B cell (primary cell): ENCODE measurements at regions of chr21 and their contacts with region 1.

Region 1: GRCh38 chr21:31731802-31732596 is at the start of gene SCAF4:
- DNase-seq: peak; percentile 90
- ATAC-seq: peak; percentile 82
- H3K4me3 ChIP-seq: peak within 1 kb of the TSS; percentile 51 to 89 (median 77)
- H3K4me3 Mint-ChIP-seq: no peak within 1 kb of the TSS
- H3K27ac ChIP-seq: peak within 1 kb of the TSS; percentile 79 to 89
- H3K27ac Mint-ChIP-seq: peak within 1 kb of the TSS; percentile 91
- H3K4me1 ChIP-seq: peaks cover 65 to 68% of the 10 kb centered on the region in 2 donors
- H3K4me1 Mint-ChIP-seq: peaks cover 30% of the 10 kb centered on the region
- H3K27me3 ChIP-seq: no peaks in the 10 kb centered on the region
- H3K27me3 Mint-ChIP-seq: no peaks in the 10 kb centered on the region
- CTCF ChIP-seq: no peak
- total RNA-seq, gene SCAF4: 110 and 116 TPM in 2 replicates

Region 2: GRCh38 chr21:31713973-31714740 is 17.8 kb before region 1 on chr21:
- CTCF ChIA-PET with region 1: no interaction called
- POLR2A ChIA-PET with region 1: interaction called, 4 read pairs
- intact Hi-C with region 1: loop called (anchors 2 kb)
- DNase-seq: no peak
- ATAC-seq: no peak
- H3K4me3 ChIP-seq: no peak overlapping the region
- H3K4me3 Mint-ChIP-seq: peak overlapping the region; percentile 10
- H3K27ac ChIP-seq: no peak overlapping the region
- H3K27ac Mint-ChIP-seq: peak overlapping the region; percentile 34
- H3K4me1 ChIP-seq: peaks cover 28 to 55% of the 10 kb centered on the region in 2 donors
- H3K4me1 Mint-ChIP-seq: peaks cover 87% of the 10 kb centered on the region
- H3K27me3 ChIP-seq: no peaks in the 10 kb centered on the region
- H3K27me3 Mint-ChIP-seq: no peaks in the 10 kb centered on the region
- CTCF ChIP-seq: no peak

Region 3: DNA sequence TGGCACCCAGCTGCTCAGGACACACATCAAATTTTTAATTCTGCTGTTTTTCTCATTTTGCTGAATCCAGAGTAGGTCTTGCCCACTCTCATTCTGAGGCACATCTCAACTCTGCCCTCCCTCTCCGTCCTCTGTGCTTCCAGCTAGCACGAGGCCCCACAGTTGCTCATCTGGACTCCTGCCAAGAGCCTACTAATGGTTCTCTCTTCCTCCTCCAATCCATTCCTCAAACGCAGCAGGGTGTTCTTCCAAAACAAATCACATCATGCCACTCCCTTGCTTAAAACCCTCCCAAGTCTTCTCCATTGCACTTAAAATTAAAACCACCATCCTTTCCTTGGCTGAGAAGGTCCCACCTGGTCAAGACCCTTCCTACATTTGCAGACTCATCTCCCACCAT is 49.7 kb after region 1 on chr21:
- CTCF ChIA-PET with region 1: interaction called, 10 read pairs
- POLR2A ChIA-PET with region 1: no interaction called
- intact Hi-C with region 1: no loop called
- DNase-seq: no peak
- ATAC-seq: no peak
- H3K4me3 ChIP-seq: no peak overlapping the region
- H3K4me3 Mint-ChIP-seq: no peak overlapping the region
- H3K27ac ChIP-seq: no peak overlapping the region
- H3K27ac Mint-ChIP-seq: no peak overlapping the region
- H3K4me1 ChIP-seq: peaks cover 6 to 11% of the 10 kb centered on the region in 2 donors
- H3K4me1 Mint-ChIP-seq: peaks cover 15% of the 10 kb centered on the region
- H3K27me3 ChIP-seq: no peaks in the 10 kb centered on the region
- H3K27me3 Mint-ChIP-seq: no peaks in the 10 kb centered on the region
- CTCF ChIP-seq: no peak

Region 4: GRCh38 chr21:32257962-32258785 is 526.2 kb after region 1 on chr21:
- CTCF ChIA-PET with region 1: no interaction called
- POLR2A ChIA-PET with region 1: no interaction called
- intact Hi-C with region 1: no loop called
- DNase-seq: peak; percentile 34
- ATAC-seq: peak; percentile 54
- H3K4me3 ChIP-seq: no peak overlapping the region
- H3K4me3 Mint-ChIP-seq: no peak overlapping the region
- H3K27ac ChIP-seq: no peak overlapping the region
- H3K27ac Mint-ChIP-seq: no peak overlapping the region
- H3K4me1 ChIP-seq: no peaks in the 10 kb centered on the region
- H3K4me1 Mint-ChIP-seq: peaks cover 2% of the 10 kb centered on the region
- H3K27me3 ChIP-seq: no peaks in the 10 kb centered on the region
- H3K27me3 Mint-ChIP-seq: peaks cover 18% of the 10 kb centered on the region
- CTCF ChIP-seq: peak; percentile 62

Region 5: DNA sequence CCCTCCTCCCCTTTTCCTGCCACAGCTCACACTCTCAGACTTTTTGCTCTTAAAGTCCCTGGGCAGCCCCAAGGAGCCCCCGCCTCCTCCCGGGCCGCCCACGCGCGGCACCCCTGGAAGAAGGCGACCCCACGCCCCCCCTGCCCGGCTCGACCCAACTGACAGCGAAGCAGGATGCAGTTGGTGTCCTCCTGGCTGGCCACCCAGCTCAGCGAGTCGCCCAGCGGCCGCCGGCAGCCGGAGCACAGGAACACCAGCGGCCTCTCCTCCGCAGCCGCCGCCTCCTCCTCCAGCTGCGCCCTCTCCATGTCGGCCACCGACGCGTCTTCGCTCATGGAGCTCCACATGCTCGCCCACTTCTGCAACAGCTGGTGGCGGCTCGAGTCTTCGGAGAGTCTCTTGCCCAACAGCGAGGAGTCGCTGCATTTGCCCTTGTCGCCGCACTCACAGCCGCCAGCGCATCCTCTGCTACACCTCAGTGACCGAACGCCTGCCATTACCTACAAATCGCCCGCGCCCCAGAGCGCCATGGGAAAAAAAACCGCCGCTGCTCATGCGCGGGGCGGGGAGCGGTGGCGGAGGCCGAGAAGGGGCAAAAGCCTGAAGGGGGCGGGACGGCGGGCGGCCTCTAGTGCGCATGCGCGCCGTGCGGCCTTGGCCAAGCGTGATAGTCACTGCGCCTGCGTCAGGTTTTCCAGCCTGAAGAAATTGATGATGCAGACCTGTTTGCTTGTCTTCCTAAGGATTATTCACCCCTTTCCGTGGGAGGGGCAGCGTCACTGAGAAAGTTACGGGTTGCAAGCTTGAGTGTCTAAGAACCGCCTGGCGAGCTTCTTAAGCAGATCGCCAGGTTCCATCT is 546.7 kb after region 1 on chr21 and contains the start of gene MIS18A:
- CTCF ChIA-PET with region 1: no interaction called
- POLR2A ChIA-PET with region 1: no interaction called
- intact Hi-C with region 1: loop called (anchors 5 kb)
- DNase-seq: peak; percentile 97
- ATAC-seq: peak; percentile 97
- H3K4me3 ChIP-seq: peak within 1 kb of the TSS; percentile 70 to 86 (median 82)
- H3K4me3 Mint-ChIP-seq: peak within 1 kb of the TSS; percentile 100
- H3K27ac ChIP-seq: peak within 1 kb of the TSS; percentile 29 to 44
- H3K27ac Mint-ChIP-seq: peak within 1 kb of the TSS; percentile 91
- H3K4me1 ChIP-seq: peaks cover 16 to 22% of the 10 kb centered on the region in 2 donors
- H3K4me1 Mint-ChIP-seq: peaks cover 22% of the 10 kb centered on the region
- H3K27me3 ChIP-seq: no peaks in the 10 kb centered on the region
- H3K27me3 Mint-ChIP-seq: no peaks in the 10 kb centered on the region
- CTCF ChIP-seq: no peak
- total RNA-seq, gene MIS18A: 8.8 and 10.4 TPM in 2 replicates

Region 6: GRCh38 chr21:32727687-32728455 is 995.9 kb after region 1 on chr21 and contains the start of gene SYNJ1:
- CTCF ChIA-PET with region 1: no interaction called
- POLR2A ChIA-PET with region 1: no interaction called
- intact Hi-C with region 1: loop called (anchors 2 kb)
- DNase-seq: peak; percentile 95
- ATAC-seq: peak; percentile 92
- H3K4me3 ChIP-seq: peak within 1 kb of the TSS; percentile 77 to 92 (median 88)
- H3K4me3 Mint-ChIP-seq: peak within 1 kb of the TSS; percentile 94
- H3K27ac ChIP-seq: peak within 1 kb of the TSS; percentile 32 to 54
- H3K27ac Mint-ChIP-seq: peak within 1 kb of the TSS; percentile 82
- H3K4me1 ChIP-seq: peaks cover 13 to 18% of the 10 kb centered on the region in 2 donors
- H3K4me1 Mint-ChIP-seq: peaks cover 16% of the 10 kb centered on the region
- H3K27me3 ChIP-seq: peaks cover 0 to 4% (median 0%) of the 10 kb centered on the region in 4 experiments
- H3K27me3 Mint-ChIP-seq: no peaks in the 10 kb centered on the region
- CTCF ChIP-seq: no peak
- total RNA-seq, gene SYNJ1: 9.2 and 9.4 TPM in 2 replicates